Esophagus squamous epithelium (tissue), 5 donors: ENCODE measurements at regions of chr7 and their contacts with region 1.

Region 1: DNA sequence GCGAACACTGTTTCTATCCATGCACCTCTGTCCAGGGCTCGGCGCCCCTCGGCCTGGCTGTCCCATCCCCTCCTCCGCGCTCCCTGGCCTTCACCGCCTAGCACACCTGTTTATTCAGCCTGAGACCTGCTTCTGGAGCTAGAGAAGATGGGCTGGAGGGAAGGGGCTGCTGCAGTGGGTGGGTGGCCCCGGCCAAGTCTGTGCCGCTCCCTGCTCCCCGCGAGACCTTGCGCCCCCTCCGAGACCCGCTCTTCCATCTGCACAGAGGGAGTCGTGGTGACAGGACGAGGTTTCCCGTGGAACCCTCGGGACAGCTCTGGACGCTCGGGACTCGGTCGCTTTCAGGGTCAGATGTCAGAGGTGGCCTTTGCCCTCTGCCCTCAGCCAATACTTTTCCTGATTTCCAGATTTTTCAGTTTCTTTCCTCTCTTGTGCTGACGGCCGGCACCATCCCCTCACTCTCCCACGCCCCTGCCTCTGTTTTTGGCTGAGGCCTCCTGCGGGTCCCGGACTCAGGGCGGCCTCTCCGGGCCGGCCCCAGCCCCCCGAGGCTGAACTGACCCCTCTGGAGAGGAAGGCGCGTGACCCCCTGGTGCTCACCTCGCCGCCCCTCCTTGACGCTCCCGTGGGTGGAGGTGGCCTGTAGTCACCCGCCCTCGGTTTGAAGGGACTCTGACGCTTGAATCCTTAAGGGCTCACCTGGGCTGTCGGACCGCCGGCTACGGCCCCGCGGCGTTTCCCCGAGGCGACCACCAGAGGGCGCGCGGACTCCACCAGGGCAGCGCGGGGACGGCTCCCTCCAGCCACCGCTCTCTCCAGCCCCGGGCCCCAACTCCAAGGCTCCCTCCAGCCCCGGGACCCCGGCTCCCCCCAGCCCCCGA is 15.6 kb downstream of the SHH start:
- DNase-seq: no peak
- H3K4me3 ChIP-seq: peak overlapping the region in 1 of 4 donors; percentile 33
- H3K27ac ChIP-seq: no peak overlapping the region
- H3K4me1 ChIP-seq: peaks cover 0 to 9% (median 0%) of the 10 kb centered on the region in 3 donors
- H3K27me3 ChIP-seq: peaks cover 0 to 71% (median 0%) of the 10 kb centered on the region in 4 donors
- CTCF ChIP-seq: peak; percentile 72 to 94 (median 81)
- POLR2A ChIP-seq: no peak

Region 2: DNA sequence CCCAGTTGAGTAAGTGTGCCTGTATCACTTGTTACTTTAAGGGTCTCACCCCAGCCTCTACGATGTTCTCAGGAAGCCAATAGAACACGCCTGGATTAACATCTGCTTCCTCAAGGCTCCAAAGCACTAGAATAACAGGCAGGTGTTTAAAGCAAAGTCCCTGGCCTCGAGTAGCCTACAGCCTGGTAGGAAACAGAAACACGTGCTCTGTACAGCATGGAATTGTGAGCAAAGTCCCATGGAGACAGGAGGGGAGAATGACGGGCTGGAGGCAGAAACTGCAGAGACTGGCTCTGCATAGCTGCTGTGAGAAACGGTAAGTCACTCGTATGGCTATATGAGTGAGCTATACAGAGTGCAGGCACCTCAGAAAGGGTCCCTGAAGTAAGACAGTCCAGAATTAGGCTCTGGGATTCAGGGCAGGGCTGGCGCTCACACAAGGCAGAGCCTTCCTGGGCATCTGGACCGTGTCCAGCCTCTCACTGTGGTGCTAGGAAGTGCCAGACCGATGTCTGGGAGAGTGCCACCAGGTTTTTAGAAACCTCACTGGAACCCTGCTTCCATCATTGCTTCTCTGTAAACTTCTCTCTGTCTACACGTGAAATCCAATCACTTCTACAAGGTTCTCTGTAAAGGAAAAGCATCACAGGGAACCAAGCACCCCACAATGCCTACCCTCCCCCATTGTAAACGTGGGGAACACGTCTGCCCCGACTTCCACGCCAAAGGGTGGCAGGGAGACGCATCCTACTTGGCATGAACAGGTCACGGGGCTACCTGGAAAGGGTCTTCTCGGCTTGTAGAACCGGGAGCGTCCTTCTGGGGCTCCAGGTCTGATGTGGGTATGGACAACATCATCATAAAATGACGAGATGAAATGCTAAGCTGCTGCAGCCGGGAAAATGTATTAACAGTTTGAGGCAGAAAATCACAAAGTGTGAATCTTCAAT is 54.4 kb after region 1 on chr7:
- intact Hi-C with region 1: no loop called
- DNase-seq: no peak
- H3K4me3 ChIP-seq: no peak overlapping the region
- H3K27ac ChIP-seq: no peak overlapping the region
- H3K4me1 ChIP-seq: no peaks in the 10 kb centered on the region
- H3K27me3 ChIP-seq: peaks cover 0 to 50% (median 0%) of the 10 kb centered on the region in 4 donors
- CTCF ChIP-seq: no peak
- POLR2A ChIP-seq: no peak

Region 3: GRCh38 chr7:155878674-155879073 is 82.1 kb after region 1 on chr7:
- intact Hi-C with region 1: no loop called
- DNase-seq: no peak
- H3K4me3 ChIP-seq: no peak overlapping the region
- H3K27ac ChIP-seq: no peak overlapping the region
- H3K4me1 ChIP-seq: no peaks in the 10 kb centered on the region
- H3K27me3 ChIP-seq: peaks cover 0 to 12% (median 0%) of the 10 kb centered on the region in 4 donors
- CTCF ChIP-seq: no peak
- POLR2A ChIP-seq: no peak

Region 4: DNA sequence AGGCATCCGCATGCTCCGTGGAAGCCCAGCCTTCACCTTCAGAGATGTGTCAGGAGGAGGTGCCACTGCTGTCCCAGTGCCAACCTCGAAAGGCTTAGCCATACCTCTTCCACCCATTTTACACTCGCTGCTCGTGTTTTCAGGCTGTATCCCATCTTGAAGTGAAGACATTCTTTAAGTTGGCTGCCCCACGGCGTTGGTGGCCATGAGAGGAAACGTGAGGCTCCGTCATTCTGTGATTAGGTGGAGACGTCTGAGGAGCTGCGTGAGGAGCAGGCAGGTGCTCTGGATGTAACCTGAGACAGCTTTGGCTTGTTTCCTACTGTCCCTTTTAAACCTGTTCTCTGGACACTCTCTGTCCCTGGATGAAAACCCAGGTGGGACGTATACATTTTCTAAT is 684.0 kb after region 1 on chr7:
- intact Hi-C with region 1: loop called (anchors 5 kb)
- DNase-seq: no peak
- H3K4me3 ChIP-seq: no peak overlapping the region
- H3K27ac ChIP-seq: no peak overlapping the region
- H3K4me1 ChIP-seq: peaks cover 0 to 1% (median 0%) of the 10 kb centered on the region in 3 donors
- H3K27me3 ChIP-seq: peaks cover 0 to 4% (median 0%) of the 10 kb centered on the region in 4 donors
- CTCF ChIP-seq: no peak
- POLR2A ChIP-seq: no peak

Region 5: DNA sequence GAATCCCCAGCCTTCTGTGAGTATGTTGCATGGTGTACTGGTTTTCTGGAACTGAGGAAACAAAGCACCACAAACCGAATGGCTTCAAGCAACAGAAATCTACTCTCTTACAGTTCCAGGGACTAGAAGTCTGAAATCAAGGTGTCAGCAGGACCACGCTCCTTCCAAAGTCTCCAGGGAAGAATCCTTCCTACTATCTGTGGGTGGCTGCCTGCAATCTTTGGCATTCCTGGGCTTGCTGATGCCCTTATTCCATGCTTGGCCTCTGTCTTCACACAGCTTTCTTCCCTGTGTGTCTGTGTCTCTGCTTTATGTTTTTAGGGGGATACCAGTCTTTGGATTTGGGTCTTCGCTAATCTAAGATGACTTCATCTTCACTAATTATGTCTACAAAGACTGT is 1015.1 kb after region 1 on chr7:
- intact Hi-C with region 1: loop called (anchors 5 kb)
- DNase-seq: no peak
- H3K4me3 ChIP-seq: no peak overlapping the region
- H3K27ac ChIP-seq: no peak overlapping the region
- H3K4me1 ChIP-seq: no peaks in the 10 kb centered on the region
- H3K27me3 ChIP-seq: no peaks in the 10 kb centered on the region
- CTCF ChIP-seq: no peak
- POLR2A ChIP-seq: no peak